ENCODE measurements at regions of chr4 and their contacts with region 1.

Region 1: GRCh38 chr4:122716825-122717448 is 15.6 kb upstream of the BBS12 start:
- DNase-seq: peak; percentile 55 to 69 (median 66)
- H3K4me3 ChIP-seq: no peak overlapping the region
- H3K27ac ChIP-seq: no peak overlapping the region
- H3K4me1 ChIP-seq: no peaks in the 10 kb centered on the region
- H3K27me3 ChIP-seq: peaks cover 0 to 5% (median 0%) of the 10 kb centered on the region in 5 experiments

Region 2: DNA sequence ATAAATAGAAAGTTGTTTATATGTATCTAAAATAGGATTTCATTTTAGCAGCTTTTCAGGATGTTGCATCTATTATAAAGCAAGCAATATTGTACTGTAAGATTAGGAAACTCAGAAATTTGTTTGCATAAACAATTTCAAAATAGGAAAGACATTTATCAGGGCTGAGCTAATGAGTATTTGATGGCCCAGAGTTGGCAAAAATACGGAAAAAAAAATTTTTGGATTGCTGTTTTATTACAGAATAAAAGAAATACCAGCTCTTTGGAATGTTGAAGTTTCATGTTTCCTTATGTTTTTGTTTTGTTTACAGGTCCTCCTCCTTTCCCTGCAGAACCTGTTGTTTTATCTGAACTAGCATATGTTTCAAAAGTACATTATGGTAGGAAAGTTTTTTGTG is 323.7 kb before region 1 on chr4:
- CTCF ChIA-PET with region 1: no interaction called
- POLR2A ChIA-PET with region 1: no interaction called
- DNase-seq: no peak
- H3K4me3 ChIP-seq: no peak overlapping the region
- H3K27ac ChIP-seq: no peak overlapping the region
- H3K4me1 ChIP-seq: no peaks in the 10 kb centered on the region
- H3K27me3 ChIP-seq: no peaks in the 10 kb centered on the region

Region 3: GRCh38 chr4:122469457-122469856 is 247.5 kb before region 1 on chr4:
- CTCF ChIA-PET with region 1: no interaction called
- POLR2A ChIA-PET with region 1: no interaction called
- DNase-seq: no peak
- H3K4me3 ChIP-seq: no peak overlapping the region
- H3K27ac ChIP-seq: no peak overlapping the region
- H3K4me1 ChIP-seq: no peaks in the 10 kb centered on the region
- H3K27me3 ChIP-seq: no peaks in the 10 kb centered on the region

Region 4: DNA sequence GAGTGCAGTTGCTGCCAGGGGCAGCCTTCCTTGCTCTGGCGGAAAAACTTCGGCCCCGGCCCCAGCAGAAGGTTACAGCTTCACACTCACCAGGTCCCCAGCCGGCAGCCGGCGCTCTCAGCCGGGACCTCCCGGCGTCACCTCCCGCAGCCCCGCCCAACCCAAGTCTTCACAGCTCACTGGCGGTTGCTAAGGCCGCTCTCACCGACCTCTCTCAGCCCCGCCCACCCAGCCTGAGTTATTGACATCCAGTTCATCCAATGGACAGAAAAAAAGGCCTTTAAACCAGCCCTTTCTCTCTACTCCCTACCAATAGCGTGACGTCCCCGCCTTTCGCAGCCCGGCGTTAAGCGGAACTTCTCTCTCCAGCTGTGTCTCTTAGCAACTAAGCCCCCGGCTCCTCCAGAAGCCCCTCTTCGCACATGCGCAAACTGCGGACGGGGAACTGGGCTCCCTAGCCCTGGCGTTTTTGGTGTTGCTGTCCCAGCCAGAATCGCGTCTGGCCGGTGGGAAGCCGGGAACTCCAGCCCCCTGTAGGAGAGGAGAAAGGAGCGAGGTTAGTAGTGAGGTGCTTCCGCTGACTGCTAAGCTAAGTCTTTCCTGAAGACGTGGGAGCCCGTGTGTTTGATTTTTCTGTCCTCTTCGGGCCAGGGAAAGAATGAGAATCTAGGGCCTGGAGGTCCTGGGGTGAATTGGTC is 15.5 kb after region 1 on chr4 and contains the start of gene BBS12:
- CTCF ChIA-PET with region 1: interaction called, 11 read pairs
- POLR2A ChIA-PET with region 1: no interaction called
- DNase-seq: peak; percentile 99 to 100 (median 100)
- H3K4me3 ChIP-seq: peak within 1 kb of the TSS; percentile 71 to 98 (median 95)
- H3K27ac ChIP-seq: peak within 1 kb of the TSS; percentile 70 to 90
- H3K4me1 ChIP-seq: peaks cover 3 to 14% (median 8%) of the 10 kb centered on the region in 4 experiments
- H3K27me3 ChIP-seq: no peaks in the 10 kb centered on the region

Region 5: DNA sequence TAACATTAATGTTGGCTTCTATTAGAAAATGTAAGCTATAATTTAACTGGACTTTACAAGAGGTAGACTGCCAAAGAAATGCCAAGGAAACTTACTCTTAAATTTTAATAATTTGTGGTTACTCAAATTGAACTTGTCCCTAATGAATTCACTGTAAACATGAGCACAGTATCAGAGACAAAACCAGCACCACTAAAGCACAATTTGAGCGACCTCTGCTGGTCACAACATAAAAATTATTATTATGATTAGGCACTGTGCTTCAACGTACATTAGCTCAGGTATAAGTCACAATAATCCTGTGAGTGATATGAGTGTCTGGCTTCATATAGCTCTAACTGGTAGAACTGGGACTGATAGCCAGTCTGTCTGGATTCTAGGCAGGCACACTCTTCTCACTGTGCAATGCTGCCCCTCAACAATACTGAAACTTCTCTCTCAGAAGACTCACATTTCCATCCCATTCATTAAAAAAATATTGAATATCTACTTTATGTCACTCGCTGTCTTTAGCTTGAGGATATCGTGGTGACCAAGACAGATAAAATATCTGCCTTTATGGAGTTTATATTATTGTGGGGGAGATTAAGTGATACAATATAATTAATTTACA is 197.5 kb after region 1 on chr4:
- CTCF ChIA-PET with region 1: no interaction called
- POLR2A ChIA-PET with region 1: no interaction called
- DNase-seq: peak; percentile 28 to 49 (median 33)
- H3K4me3 ChIP-seq: no peak overlapping the region
- H3K27ac ChIP-seq: no peak overlapping the region
- H3K4me1 ChIP-seq: no peaks in the 10 kb centered on the region
- H3K27me3 ChIP-seq: no peaks in the 10 kb centered on the region

Measured in common myeloid progenitor, CD34-positive (primary cell).